B cell (primary cell): ENCODE measurements at regions of chr3 and their contacts with region 1.

Region 1: DNA sequence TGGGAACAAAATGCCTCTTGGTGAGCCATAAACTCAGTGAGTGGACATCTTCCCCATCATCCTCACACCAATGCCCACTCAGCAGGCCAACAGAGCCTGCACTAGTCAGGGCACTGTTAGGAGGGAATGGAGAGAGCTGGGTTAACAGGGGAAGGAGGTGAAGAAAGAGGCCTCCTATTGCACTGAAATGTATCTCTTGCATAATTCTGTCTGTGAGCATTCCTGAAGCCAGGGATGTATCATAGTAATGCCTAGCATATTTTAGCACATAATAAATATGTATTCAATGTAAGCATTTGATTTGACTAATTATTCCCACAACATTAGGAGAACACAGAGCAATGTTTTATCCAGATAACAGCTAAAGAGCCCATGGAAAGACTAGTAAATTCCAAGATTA is 81.2 kb downstream of the ANO10 start:
- DNase-seq: no peak
- ATAC-seq: no peak
- H3K4me3 ChIP-seq: no peak overlapping the region
- H3K4me3 Mint-ChIP-seq: no peak overlapping the region
- H3K27ac ChIP-seq: no peak overlapping the region
- H3K27ac Mint-ChIP-seq: no peak overlapping the region
- H3K4me1 ChIP-seq: no peaks in the 10 kb centered on the region
- H3K4me1 Mint-ChIP-seq: no peaks in the 10 kb centered on the region
- H3K27me3 ChIP-seq: no peaks in the 10 kb centered on the region
- H3K27me3 Mint-ChIP-seq: no peaks in the 10 kb centered on the region
- CTCF ChIP-seq: no peak

Region 2: DNA sequence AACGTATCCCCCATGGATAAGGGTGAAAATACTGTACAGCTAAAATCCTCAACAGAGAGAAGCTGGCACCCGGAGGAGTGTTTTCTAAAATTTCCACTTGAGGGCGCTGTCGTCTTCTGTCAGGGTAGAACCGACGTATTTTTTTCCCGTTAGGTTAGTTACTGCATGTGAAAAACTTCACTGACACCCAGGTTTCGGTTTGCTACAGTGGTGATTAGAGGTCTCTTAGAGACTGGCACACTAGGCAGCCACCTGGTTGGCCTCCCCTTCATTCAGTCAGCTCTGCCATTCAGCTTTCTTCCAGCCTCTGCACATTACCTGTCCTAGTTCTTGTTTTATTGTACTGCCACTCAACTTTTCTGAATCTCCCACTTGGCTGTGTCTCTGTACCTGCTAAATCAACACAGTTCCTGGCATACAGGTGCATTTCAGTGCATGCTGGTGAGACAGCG is 1293.0 kb before region 1 on chr3:
- CTCF ChIA-PET with region 1: no interaction called
- POLR2A ChIA-PET with region 1: no interaction called
- intact Hi-C with region 1: no loop called
- DNase-seq: peak; percentile 69
- ATAC-seq: peak; percentile 45
- H3K4me3 ChIP-seq: no peak overlapping the region
- H3K4me3 Mint-ChIP-seq: no peak overlapping the region
- H3K27ac ChIP-seq: no peak overlapping the region
- H3K27ac Mint-ChIP-seq: no peak overlapping the region
- H3K4me1 ChIP-seq: peaks cover 4 to 6% of the 10 kb centered on the region in 2 donors
- H3K4me1 Mint-ChIP-seq: peaks cover 7% of the 10 kb centered on the region
- H3K27me3 ChIP-seq: peaks cover 0 to 8% (median 0%) of the 10 kb centered on the region in 4 experiments
- H3K27me3 Mint-ChIP-seq: peaks cover 22% of the 10 kb centered on the region
- CTCF ChIP-seq: peak; percentile 83

Region 3: GRCh38 chr3:43690400-43691119 is 149.9 kb after region 1 on chr3 and contains the start of gene ABHD5:
- CTCF ChIA-PET with region 1: no interaction called
- POLR2A ChIA-PET with region 1: no interaction called
- intact Hi-C with region 1: loop called (anchors 1 kb)
- DNase-seq: peak; percentile 98
- ATAC-seq: peak; percentile 82
- H3K4me3 ChIP-seq: peak within 1 kb of the TSS; percentile 58 to 86 (median 83)
- H3K4me3 Mint-ChIP-seq: peak within 1 kb of the TSS; percentile 98
- H3K27ac ChIP-seq: peak within 1 kb of the TSS; percentile 58 to 87
- H3K27ac Mint-ChIP-seq: peak within 1 kb of the TSS; percentile 98
- H3K4me1 ChIP-seq: peaks cover 5 to 21% of the 10 kb centered on the region in 2 donors
- H3K4me1 Mint-ChIP-seq: peaks cover 27% of the 10 kb centered on the region
- H3K27me3 ChIP-seq: no peaks in the 10 kb centered on the region
- H3K27me3 Mint-ChIP-seq: no peaks in the 10 kb centered on the region
- CTCF ChIP-seq: peak; percentile 39
- total RNA-seq, gene ABHD5: 11.0 and 12.1 TPM in 2 replicates

Region 4: GRCh38 chr3:43742920-43743319 is 202.3 kb after region 1 on chr3:
- CTCF ChIA-PET with region 1: no interaction called
- POLR2A ChIA-PET with region 1: no interaction called
- intact Hi-C with region 1: loop called (anchors 2 kb)
- DNase-seq: no peak
- ATAC-seq: no peak
- H3K4me3 ChIP-seq: no peak overlapping the region
- H3K4me3 Mint-ChIP-seq: no peak overlapping the region
- H3K27ac ChIP-seq: no peak overlapping the region
- H3K27ac Mint-ChIP-seq: no peak overlapping the region
- H3K4me1 ChIP-seq: no peaks in the 10 kb centered on the region
- H3K4me1 Mint-ChIP-seq: no peaks in the 10 kb centered on the region
- H3K27me3 ChIP-seq: peaks cover 0 to 5% (median 2%) of the 10 kb centered on the region in 4 experiments
- H3K27me3 Mint-ChIP-seq: peaks cover 8% of the 10 kb centered on the region
- CTCF ChIP-seq: no peak

Region 5: GRCh38 chr3:43870120-43870519 is 329.5 kb after region 1 on chr3:
- CTCF ChIA-PET with region 1: no interaction called
- POLR2A ChIA-PET with region 1: no interaction called
- intact Hi-C with region 1: no loop called
- DNase-seq: no peak
- ATAC-seq: no peak
- H3K4me3 ChIP-seq: no peak overlapping the region
- H3K4me3 Mint-ChIP-seq: no peak overlapping the region
- H3K27ac ChIP-seq: no peak overlapping the region
- H3K27ac Mint-ChIP-seq: no peak overlapping the region
- H3K4me1 ChIP-seq: no peaks in the 10 kb centered on the region
- H3K4me1 Mint-ChIP-seq: no peaks in the 10 kb centered on the region
- H3K27me3 ChIP-seq: peaks cover 0 to 4% (median 0%) of the 10 kb centered on the region in 4 experiments
- H3K27me3 Mint-ChIP-seq: peaks cover 29% of the 10 kb centered on the region
- CTCF ChIP-seq: no peak

Region 6: GRCh38 chr3:44235604-44236484 is 695.2 kb after region 1 on chr3:
- CTCF ChIA-PET with region 1: interaction called, 10 read pairs
- POLR2A ChIA-PET with region 1: no interaction called
- intact Hi-C with region 1: loop called (anchors 1 kb)
- DNase-seq: peak; percentile 58
- ATAC-seq: peak; percentile 65
- H3K4me3 ChIP-seq: no peak overlapping the region
- H3K4me3 Mint-ChIP-seq: no peak overlapping the region
- H3K27ac ChIP-seq: no peak overlapping the region
- H3K27ac Mint-ChIP-seq: no peak overlapping the region
- H3K4me1 ChIP-seq: peaks cover 0 to 3% of the 10 kb centered on the region in 2 donors
- H3K4me1 Mint-ChIP-seq: peaks cover 5% of the 10 kb centered on the region
- H3K27me3 ChIP-seq: no peaks in the 10 kb centered on the region
- H3K27me3 Mint-ChIP-seq: peaks cover 14% of the 10 kb centered on the region
- CTCF ChIP-seq: peak; percentile 85